ENCODE measurements at regions of chr6 and their contacts with region 1.

Region 1: DNA sequence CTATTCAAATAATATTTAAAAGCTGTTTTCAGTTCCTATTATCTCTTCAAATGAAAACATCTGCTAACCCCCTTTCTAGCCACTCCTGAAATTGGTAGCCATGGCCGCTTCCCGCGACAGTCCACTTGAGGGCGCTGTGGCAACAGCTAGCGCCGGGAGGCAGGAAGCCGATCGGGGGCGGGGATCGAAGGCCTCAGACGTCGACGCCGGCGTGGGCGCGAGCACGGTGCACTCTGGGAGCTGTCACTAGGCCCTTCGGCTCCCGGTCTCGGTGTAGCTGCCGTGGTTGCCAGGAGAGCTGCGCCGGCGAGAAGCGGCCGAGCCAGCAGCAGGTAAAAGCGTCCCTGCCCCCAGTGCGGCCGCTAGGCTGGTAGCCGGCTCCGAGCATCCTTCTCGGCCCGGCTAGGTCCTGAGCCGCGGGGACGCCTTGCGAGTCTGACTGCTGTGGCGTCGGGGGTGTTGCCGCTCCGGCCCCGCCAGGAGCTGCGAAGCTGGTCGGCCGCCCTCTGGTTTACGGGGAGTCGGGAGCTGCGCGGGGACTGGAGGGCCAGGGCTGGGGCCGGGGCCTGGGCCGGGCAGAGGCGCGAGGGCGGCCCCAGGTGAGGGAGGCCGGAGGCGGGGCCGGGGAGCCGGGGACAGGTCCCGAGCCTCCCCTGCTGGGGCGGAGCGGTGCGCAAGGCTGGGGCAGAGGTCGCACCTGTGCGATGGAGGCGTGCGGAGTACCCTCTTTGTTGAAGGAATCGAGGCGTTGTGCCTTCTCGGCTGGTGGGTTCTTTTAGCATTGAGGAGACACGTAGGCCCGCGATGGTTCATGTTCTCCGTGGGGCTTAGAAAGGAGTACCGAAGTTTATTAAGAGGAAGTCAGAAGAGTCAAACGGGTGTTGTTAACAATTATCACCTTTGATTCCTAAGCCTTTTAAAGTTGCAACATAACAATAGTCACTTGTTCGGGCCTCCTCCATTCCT is at the start of gene DOP1A:
- DNase-seq: peak; percentile 92 to 98 (median 97)
- ATAC-seq: peak; percentile 86
- H3K4me3 ChIP-seq: peak within 1 kb of the TSS; percentile 78 to 82
- H3K4me3 Mint-ChIP-seq: peak within 1 kb of the TSS; percentile 95
- H3K27ac ChIP-seq: peak within 1 kb of the TSS; percentile 87 to 91
- H3K27ac Mint-ChIP-seq: peak within 1 kb of the TSS; percentile 97
- H3K4me1 ChIP-seq: peaks cover 23% of the 10 kb centered on the region
- H3K4me1 Mint-ChIP-seq: peaks cover 58% of the 10 kb centered on the region
- H3K27me3 ChIP-seq: no peaks in the 10 kb centered on the region
- H3K27me3 Mint-ChIP-seq: no peaks in the 10 kb centered on the region
- CTCF ChIP-seq: peak; percentile 91
- total RNA-seq, gene DOP1A: 12.1 to 12.3 TPM

Region 2: GRCh38 chr6:82247634-82248232 is 820.0 kb before region 1 on chr6 and contains the start of gene IBTK:
- CTCF ChIA-PET with region 1: interaction called, 9 read pairs
- POLR2A ChIA-PET with region 1: no interaction called
- intact Hi-C with region 1: loop called (anchors 1 to 2 kb)
- DNase-seq: peak; percentile 84 to 97 (median 90)
- ATAC-seq: peak; percentile 85
- H3K4me3 ChIP-seq: peak within 1 kb of the TSS; percentile 93 to 98
- H3K4me3 Mint-ChIP-seq: peak within 1 kb of the TSS; percentile 98
- H3K27ac ChIP-seq: peak within 1 kb of the TSS; percentile 82 to 86
- H3K27ac Mint-ChIP-seq: peak within 1 kb of the TSS; percentile 97
- H3K4me1 ChIP-seq: peaks cover 24% of the 10 kb centered on the region
- H3K4me1 Mint-ChIP-seq: peaks cover 39% of the 10 kb centered on the region
- H3K27me3 ChIP-seq: no peaks in the 10 kb centered on the region
- H3K27me3 Mint-ChIP-seq: peaks cover 2% of the 10 kb centered on the region
- CTCF ChIP-seq: no peak
- total RNA-seq, gene IBTK: 9.7 to 9.9 TPM

Region 3: DNA sequence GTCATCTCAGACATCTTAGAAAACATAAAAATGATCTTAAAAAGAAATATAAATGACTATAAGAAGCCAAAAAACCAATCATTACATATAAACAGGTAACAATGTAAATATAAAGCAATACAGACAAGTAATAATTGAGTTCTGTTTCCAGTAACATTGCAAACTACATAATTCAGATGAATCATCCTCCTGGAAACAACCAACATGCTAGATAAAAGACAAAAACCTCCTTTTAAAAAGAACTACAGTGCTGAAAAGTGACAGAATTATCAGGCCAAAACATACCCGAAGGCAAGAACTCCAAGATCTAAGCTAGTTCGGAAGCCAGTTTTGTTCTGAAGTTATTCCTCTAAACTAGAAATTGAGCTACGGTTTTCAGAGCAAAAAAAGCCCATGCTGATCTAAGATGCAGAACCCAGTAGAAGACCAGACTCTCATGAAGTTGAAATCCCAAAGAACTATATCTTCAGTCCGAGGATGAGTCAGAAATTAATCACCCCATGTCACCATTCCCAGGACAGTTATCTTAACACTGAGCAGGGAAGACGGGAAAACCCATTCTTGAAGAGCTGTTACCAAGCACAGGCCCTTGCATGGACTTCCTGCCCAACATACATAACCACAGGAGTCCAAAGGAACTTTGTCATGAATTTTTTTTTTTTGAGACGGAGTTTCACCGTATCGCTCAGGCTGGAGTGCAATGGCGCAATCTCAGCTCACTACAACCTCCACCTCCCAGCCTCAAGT is 115.5 kb after region 1 on chr6:
- CTCF ChIA-PET with region 1: interaction called, 33 read pairs
- POLR2A ChIA-PET with region 1: no interaction called
- intact Hi-C with region 1: no loop called
- DNase-seq: no peak
- ATAC-seq: no peak
- H3K4me3 ChIP-seq: no peak overlapping the region
- H3K4me3 Mint-ChIP-seq: no peak overlapping the region
- H3K27ac ChIP-seq: no peak overlapping the region
- H3K27ac Mint-ChIP-seq: no peak overlapping the region
- H3K4me1 ChIP-seq: no peaks in the 10 kb centered on the region
- H3K4me1 Mint-ChIP-seq: peaks cover 11% of the 10 kb centered on the region
- H3K27me3 ChIP-seq: no peaks in the 10 kb centered on the region
- H3K27me3 Mint-ChIP-seq: no peaks in the 10 kb centered on the region
- CTCF ChIP-seq: no peak

Region 4: GRCh38 chr6:83215131-83216047 is 147.7 kb after region 1 on chr6:
- CTCF ChIA-PET with region 1: interaction called, 73 read pairs
- POLR2A ChIA-PET with region 1: interaction called, 7 read pairs
- intact Hi-C with region 1: loop called (anchors 1 to 5 kb)
- DNase-seq: peak; percentile 11 to 72 (median 53)
- ATAC-seq: peak; percentile 90
- H3K4me3 ChIP-seq: no peak overlapping the region
- H3K4me3 Mint-ChIP-seq: no peak overlapping the region
- H3K27ac ChIP-seq: no peak overlapping the region
- H3K27ac Mint-ChIP-seq: no peak overlapping the region
- H3K4me1 ChIP-seq: no peaks in the 10 kb centered on the region
- H3K4me1 Mint-ChIP-seq: no peaks in the 10 kb centered on the region
- H3K27me3 ChIP-seq: no peaks in the 10 kb centered on the region
- H3K27me3 Mint-ChIP-seq: peaks cover 9% of the 10 kb centered on the region
- CTCF ChIP-seq: peak; percentile 68

Region 5: DNA sequence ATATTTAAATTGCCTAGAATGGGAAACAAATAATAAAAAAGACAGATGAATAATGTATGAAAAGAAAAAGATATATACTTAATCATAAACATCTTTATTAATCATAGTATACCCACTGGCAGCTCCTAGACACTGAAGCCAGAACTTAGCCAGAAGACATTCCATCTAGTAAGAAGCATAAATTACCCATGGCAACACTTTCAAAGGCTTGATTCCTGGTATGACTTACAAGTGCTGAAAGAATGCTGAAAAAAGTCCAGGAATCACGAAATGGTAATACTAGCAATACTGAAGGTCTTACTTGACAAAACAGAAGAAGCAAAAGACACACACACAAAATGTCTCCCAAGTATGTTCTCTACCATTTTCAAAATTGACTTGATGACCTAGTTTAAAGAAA is 163.4 kb after region 1 on chr6:
- CTCF ChIA-PET with region 1: no interaction called
- POLR2A ChIA-PET with region 1: no interaction called
- intact Hi-C with region 1: no loop called
- DNase-seq: no peak
- ATAC-seq: no peak
- H3K4me3 ChIP-seq: no peak overlapping the region
- H3K4me3 Mint-ChIP-seq: no peak overlapping the region
- H3K27ac ChIP-seq: no peak overlapping the region
- H3K27ac Mint-ChIP-seq: no peak overlapping the region
- H3K4me1 ChIP-seq: no peaks in the 10 kb centered on the region
- H3K4me1 Mint-ChIP-seq: no peaks in the 10 kb centered on the region
- H3K27me3 ChIP-seq: no peaks in the 10 kb centered on the region
- H3K27me3 Mint-ChIP-seq: peaks cover 7% of the 10 kb centered on the region
- CTCF ChIP-seq: no peak

Region 6: DNA sequence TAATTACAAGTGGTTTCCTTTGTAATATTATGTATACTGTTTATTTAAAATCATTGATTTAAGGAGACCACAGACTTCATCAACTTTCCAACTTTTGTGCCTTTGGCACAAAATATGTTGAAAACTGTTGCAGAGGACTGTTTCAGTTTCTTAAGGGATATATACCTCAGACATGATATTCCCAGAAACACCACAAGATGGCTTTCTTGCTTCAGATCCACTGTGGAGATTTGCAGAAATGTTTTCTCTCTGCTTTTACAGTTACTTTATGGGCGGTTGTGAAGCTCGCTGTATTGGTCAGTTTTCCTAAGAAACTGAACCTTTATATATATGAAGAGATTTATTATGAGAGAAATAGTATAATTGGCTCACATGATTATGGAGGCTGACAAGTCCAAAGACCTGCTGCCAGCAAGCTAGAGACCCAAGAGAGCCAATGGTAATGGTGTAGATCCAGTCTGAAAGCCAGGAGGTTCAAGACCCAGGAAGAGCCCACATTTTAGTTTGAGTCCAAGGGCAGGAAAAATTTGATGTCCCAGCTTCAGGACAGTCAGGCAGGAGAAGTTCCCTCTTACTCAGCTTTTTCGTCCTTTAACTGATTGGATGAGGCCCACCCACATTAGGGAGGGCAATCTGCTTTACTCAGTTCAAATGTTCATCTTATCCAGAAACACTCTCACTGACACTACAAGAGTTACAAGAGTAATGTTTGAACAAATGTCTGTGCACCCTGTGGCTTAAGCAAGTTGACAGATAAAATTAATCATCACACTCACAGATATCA is 350.3 kb after region 1 on chr6:
- CTCF ChIA-PET with region 1: no interaction called
- POLR2A ChIA-PET with region 1: no interaction called
- intact Hi-C with region 1: no loop called
- DNase-seq: peak in 2 of 9 experiments; percentile 6 to 12
- ATAC-seq: no peak
- H3K4me3 ChIP-seq: no peak overlapping the region
- H3K4me3 Mint-ChIP-seq: no peak overlapping the region
- H3K27ac ChIP-seq: no peak overlapping the region
- H3K27ac Mint-ChIP-seq: no peak overlapping the region
- H3K4me1 ChIP-seq: no peaks in the 10 kb centered on the region
- H3K4me1 Mint-ChIP-seq: no peaks in the 10 kb centered on the region
- H3K27me3 ChIP-seq: no peaks in the 10 kb centered on the region
- H3K27me3 Mint-ChIP-seq: no peaks in the 10 kb centered on the region
- CTCF ChIP-seq: no peak

Region 7: GRCh38 chr6:83859410-83860358 is 792.0 kb after region 1 on chr6 and contains the start of gene CYB5R4:
- CTCF ChIA-PET with region 1: interaction called, 4 read pairs
- POLR2A ChIA-PET with region 1: interaction called, 5 read pairs
- intact Hi-C with region 1: loop called (anchors 1 to 2 kb)
- DNase-seq: peak; percentile 87 to 97 (median 93)
- ATAC-seq: peak; percentile 96
- H3K4me3 ChIP-seq: peak within 1 kb of the TSS; percentile 69 to 78
- H3K4me3 Mint-ChIP-seq: peak within 1 kb of the TSS; percentile 95
- H3K27ac ChIP-seq: peak within 1 kb of the TSS; percentile 83 to 86
- H3K27ac Mint-ChIP-seq: peak within 1 kb of the TSS; percentile 91
- H3K4me1 ChIP-seq: peaks cover 18% of the 10 kb centered on the region
- H3K4me1 Mint-ChIP-seq: peaks cover 41% of the 10 kb centered on the region
- H3K27me3 ChIP-seq: no peaks in the 10 kb centered on the region
- H3K27me3 Mint-ChIP-seq: peaks cover 12% of the 10 kb centered on the region
- CTCF ChIP-seq: peak; percentile 52
- total RNA-seq, gene CYB5R4: 15.9 to 17.7 TPM

Region 8: DNA sequence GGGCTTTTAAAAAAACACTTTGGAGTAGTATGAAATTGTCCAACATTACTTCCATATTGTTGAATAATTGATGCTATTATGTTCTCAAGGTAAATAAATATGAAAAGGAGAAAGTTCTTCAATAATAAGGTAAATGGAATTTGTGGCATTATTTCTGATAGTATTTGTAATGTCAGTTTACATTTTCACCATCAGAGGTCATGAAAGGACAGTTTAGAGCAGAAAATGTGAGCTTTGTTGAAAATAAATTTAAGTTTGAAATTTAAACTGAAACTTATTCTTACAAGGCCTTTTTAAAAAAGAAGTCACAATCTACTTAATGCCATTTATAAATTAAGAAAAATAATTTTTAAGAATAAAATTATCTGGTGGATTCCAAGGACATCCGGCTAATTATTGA is 1175.5 kb after region 1 on chr6:
- CTCF ChIA-PET with region 1: no interaction called
- POLR2A ChIA-PET with region 1: no interaction called
- intact Hi-C with region 1: no loop called
- DNase-seq: no peak
- ATAC-seq: no peak
- H3K4me3 ChIP-seq: no peak overlapping the region
- H3K4me3 Mint-ChIP-seq: no peak overlapping the region
- H3K27ac ChIP-seq: no peak overlapping the region
- H3K27ac Mint-ChIP-seq: no peak overlapping the region
- H3K4me1 ChIP-seq: no peaks in the 10 kb centered on the region
- H3K4me1 Mint-ChIP-seq: no peaks in the 10 kb centered on the region
- H3K27me3 ChIP-seq: no peaks in the 10 kb centered on the region
- H3K27me3 Mint-ChIP-seq: peaks cover 5% of the 10 kb centered on the region
- CTCF ChIP-seq: no peak